Colonic mucosa (tissue), 4 donors: ENCODE measurements at regions of chr2 and their contacts with region 1.

Region 1: GRCh38 chr2:68925295-68925896 is 27.3 kb downstream of the GKN2 start:
- DNase-seq: peak; percentile 58
- H3K4me3 ChIP-seq: no peak overlapping the region
- H3K27ac ChIP-seq: no peak overlapping the region
- H3K4me1 ChIP-seq: no peaks in the 10 kb centered on the region
- H3K27me3 ChIP-seq: no peaks in the 10 kb centered on the region
- CTCF ChIP-seq: peak; percentile 81

Region 2: DNA sequence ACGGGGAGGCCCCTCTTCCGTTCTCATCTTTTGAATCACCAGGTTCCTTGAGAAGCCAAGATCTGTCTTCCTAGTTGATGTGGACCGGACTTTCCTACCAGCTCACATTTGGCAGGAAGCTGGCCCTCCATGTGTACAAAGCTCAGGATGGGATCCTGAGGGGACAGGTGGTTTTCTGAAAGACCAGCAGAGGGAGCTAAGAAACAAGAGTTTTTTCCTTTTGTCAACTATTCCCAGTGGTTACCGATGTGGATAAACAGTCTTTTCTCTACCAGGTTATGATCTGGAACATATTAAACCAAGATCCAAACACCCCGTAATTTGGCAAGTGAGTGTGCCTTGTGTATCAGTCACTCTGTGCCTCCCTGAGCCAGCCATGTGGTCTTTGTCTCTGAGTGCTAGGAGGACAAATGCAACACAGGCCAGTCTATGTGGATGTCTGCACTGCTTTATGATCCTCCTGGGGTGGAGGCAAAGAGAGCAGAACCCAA is 215.9 kb before region 1 on chr2:
- intact Hi-C with region 1: loop called (anchors 5 kb)
- DNase-seq: no peak
- H3K4me3 ChIP-seq: no peak overlapping the region
- H3K27ac ChIP-seq: no peak overlapping the region
- H3K4me1 ChIP-seq: no peaks in the 10 kb centered on the region
- H3K27me3 ChIP-seq: no peaks in the 10 kb centered on the region
- CTCF ChIP-seq: peak; percentile 69